ENCODE measurements at regions of chr6 and their contacts with region 1.

Region 1: DNA sequence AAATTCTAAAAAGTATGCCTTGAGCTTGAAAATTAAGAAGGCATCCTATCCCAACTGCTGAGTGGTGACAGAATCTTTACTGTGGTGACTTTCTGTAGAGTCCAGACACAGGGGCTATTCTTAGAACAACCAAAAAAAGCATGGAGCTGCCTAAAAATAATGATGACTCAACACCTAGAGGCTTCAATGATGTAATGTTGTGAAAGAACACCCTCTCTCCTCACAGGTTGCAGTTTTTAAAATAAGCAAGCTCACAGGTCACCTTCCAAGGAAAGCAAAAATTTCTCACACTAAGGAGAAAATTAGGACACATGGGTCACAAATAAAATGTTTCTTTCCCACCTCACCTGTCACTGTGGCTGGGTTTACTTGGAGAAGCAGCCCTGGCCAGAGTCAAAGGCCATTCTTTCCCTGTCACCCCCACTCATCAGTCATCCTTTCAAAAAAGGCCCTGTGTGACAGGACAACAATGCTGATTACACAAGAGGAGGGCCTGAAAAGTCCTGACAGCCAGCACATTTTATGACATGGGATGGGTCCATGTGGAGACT is 53.5 kb downstream of the RCAN2 start:
- DNase-seq: no peak

Region 2: DNA sequence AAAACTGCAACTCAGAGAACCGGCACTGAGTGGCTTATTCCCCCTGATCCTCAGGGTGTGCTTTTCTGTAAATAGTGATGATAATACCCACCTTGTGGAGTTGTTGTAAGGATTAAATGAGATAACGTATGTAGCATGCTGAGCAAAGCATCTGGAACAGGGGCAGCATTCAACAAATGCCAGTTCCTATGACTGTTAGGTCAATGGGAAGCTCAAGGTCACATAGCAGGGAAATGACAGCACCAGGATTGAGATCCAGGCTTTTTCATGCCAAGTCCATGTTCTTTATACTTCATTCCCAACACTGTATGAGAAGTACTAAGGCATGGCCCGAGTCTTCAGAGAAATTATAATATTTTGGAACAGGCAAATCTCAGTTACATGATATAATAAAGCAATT is 48.4 kb after region 1 on chr6:
- intact Hi-C with region 1: loop called (anchors 5 kb)
- DNase-seq: no peak

Measured in cardiac septum (tissue), 1 donor.